Panc1 (cell line): ENCODE measurements at regions of chr1 and their contacts with region 1.

Region 1: GRCh38 chr1:212608209-212608955 is at the start of gene ATF3:
- DNase-seq: peak; percentile 96
- ATAC-seq: peak; percentile 89
- H3K4me3 ChIP-seq: peak within 1 kb of the TSS; percentile 74 to 84
- H3K27ac ChIP-seq: peak within 1 kb of the TSS; percentile 84
- H3K4me1 ChIP-seq: peaks cover 20% of the 10 kb centered on the region
- H3K27me3 ChIP-seq: peaks cover 42% of the 10 kb centered on the region
- CTCF ChIP-seq: no peak
- total RNA-seq, gene ATF3: 13.3 TPM

Region 2: DNA sequence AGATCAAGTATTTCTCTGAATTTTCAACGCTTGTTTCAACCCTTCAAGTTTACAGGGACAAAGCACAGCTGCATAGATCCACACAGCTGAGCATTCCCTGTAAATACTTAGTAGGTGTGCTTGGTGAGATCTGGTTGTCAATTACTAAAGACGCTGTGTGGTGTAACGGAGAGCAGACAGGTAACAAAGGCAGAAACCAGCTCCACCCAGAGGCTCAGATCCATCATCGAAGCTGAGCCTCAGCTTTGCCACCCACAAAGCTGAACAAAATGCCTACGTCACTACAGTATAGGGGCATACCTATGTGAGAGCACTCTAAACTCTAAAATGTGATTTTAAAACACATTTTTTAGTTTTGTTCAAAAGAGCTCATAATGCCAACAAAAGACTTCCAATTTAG is 232.4 kb before region 1 on chr1:
- CTCF ChIA-PET with region 1: no interaction called
- POLR2A ChIA-PET with region 1: interaction called, 10 read pairs
- in situ Hi-C with region 1: no loop called
- intact Hi-C with region 1: no loop called
- DNase-seq: no peak
- ATAC-seq: no peak
- H3K4me3 ChIP-seq: no peak overlapping the region
- H3K27ac ChIP-seq: no peak overlapping the region
- H3K4me1 ChIP-seq: no peaks in the 10 kb centered on the region
- H3K27me3 ChIP-seq: no peaks in the 10 kb centered on the region
- CTCF ChIP-seq: no peak

Region 3: GRCh38 chr1:212432706-212433576 is 175.4 kb before region 1 on chr1 and contains the start of gene NENF:
- CTCF ChIA-PET with region 1: no interaction called
- POLR2A ChIA-PET with region 1: interaction called, 12 read pairs
- in situ Hi-C with region 1: no loop called
- intact Hi-C with region 1: no loop called
- DNase-seq: no peak
- ATAC-seq: peak; percentile 100
- H3K4me3 ChIP-seq: peak within 1 kb of the TSS; percentile 72 to 80
- H3K27ac ChIP-seq: peak within 1 kb of the TSS; percentile 97
- H3K4me1 ChIP-seq: peaks cover 3% of the 10 kb centered on the region; the same call in 1 of the 2 replicates
- H3K27me3 ChIP-seq: no peaks in the 10 kb centered on the region
- CTCF ChIP-seq: no peak
- total RNA-seq, gene NENF: 72.4 TPM

Region 4: DNA sequence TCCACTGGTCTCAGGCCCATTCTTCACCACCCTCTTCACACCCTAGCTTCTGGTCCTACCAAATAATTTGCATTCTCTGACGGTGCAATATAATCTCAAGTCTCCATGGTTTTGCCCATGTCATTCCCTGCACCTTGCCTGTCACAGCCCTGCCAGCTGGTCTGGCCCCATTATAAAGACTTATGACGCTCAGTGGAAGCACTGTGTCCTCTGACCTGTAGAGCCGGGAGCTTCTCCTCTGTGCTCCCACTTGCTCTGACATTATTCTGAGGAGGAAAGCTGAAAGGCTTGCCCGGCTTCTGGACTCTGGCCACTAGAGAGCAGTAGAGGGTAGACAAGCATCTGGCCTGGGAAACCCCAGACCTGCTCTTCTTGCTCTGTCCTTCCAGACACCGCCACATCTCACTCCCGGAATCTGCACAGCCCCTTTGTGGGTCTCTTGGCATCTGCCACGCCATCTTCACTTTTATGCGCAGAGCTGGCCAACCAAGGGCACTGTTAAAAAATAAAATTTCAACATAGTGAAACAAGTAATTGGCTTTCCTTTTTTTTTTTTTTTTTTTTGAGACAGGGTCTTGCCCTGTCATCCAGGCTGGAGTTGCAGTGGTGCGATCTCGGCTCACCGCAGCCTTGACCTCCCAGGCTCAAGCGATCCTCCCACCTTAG is 131.2 kb before region 1 on chr1:
- CTCF ChIA-PET with region 1: interaction called, 9 read pairs
- POLR2A ChIA-PET with region 1: interaction called, 17 read pairs
- in situ Hi-C with region 1: no loop called
- intact Hi-C with region 1: no loop called
- DNase-seq: peak; percentile 81
- ATAC-seq: peak; percentile 96
- H3K4me3 ChIP-seq: no peak overlapping the region
- H3K27ac ChIP-seq: no peak overlapping the region
- H3K4me1 ChIP-seq: 0 out of 2 replicates have a peak, but pooled peaks cover 2% of the 10 kb centered on the region
- H3K27me3 ChIP-seq: no peaks in the 10 kb centered on the region
- CTCF ChIP-seq: peak; percentile 95

Region 5: DNA sequence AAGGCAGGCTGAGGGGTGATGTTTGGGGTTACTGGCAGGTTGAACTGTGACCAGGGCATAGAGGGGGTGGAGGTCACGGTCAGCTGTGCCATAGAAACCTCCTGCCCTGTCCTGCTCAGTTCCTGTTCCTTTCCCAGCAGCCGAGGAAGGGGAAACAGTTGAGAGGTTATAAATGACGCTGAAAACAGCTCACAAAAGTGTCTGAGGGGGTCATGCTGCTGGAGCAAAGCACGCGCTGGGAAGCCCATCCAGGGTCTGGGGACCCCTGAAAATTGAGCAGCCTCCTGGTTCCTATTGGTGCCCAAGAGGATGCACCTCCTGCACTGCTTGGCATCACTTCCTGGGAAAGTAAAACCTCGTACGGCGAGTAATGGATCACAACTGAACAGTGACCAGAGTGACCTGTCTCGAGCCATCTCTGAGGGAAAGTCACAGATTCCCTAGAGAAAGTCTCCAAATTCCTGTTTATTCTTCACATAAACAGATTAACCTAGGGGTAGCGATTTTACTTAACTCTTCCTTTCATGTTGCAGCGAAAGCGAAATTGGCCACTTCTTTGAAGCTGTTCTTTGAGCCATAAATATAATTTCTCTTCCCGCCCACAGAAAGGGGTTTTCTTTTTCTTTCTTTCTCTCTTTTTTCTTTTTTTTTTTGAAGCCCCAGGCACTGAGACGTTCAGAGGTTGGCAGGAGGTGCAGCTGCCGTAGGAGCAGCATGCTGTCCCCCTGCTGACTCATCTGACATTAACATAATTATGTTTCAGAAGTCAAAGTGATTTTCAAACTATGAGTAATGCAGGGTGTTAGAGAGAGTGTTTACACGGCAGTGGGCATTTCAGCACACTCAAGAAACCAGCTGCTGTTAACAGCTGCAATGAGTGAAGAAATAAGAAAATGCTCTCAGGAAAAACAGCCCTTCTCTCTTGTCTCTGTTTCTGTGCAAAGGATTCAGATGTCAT is 41.6 kb before region 1 on chr1:
- CTCF ChIA-PET with region 1: no interaction called
- POLR2A ChIA-PET with region 1: interaction called, 17 read pairs
- in situ Hi-C with region 1: no loop called
- intact Hi-C with region 1: no loop called
- DNase-seq: peak; percentile 24
- ATAC-seq: peak; percentile 90
- H3K4me3 ChIP-seq: peak overlapping the region; percentile 47 to 81
- H3K27ac ChIP-seq: peak overlapping the region; percentile 80
- H3K4me1 ChIP-seq: peaks cover 20% of the 10 kb centered on the region
- H3K27me3 ChIP-seq: no peaks in the 10 kb centered on the region
- CTCF ChIP-seq: no peak

Region 6: DNA sequence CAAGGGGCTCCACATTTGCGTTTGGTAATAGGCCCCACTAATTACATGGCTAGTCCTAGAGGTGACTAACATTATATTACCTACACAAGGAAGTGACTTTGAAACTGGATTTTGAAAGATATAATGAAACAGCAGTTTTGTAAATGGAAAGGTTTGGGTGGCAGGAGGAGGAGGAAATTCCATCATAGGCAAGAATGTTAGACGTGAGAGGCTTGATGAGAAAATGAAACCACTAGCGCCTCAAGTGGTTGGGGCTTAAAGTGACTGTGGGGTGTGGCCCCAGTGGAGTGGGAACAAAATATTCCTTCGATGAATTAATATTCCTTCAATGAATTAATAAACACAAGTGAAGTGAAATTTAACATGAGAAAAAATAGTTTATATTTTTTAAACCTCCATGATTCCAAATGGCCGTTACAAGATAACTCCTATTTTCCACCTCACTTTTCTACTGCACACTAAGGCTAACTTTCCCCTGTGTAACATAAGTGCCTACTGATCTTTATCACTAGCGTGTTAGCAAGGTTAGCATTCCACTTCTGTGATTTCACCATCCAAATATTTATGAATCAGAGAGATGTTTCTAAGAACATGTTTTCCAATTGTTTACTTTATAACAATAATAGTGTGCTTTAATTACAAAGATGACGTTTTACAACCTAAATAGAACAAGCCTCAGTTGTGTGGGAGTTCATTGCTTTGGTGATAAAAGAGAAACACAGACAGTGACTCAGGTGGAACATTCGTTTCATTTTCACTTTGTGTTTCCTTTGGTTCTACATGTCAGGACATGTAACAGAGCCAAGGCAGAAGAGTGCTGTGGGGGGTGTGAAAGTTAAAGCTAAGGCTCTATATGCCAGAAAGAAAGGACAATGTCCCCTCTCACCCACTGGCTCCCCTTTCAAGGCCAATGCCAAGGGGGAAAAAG is 12.3 kb before region 1 on chr1:
- CTCF ChIA-PET with region 1: interaction called, 6 read pairs
- POLR2A ChIA-PET with region 1: interaction called, 14 read pairs
- in situ Hi-C with region 1: no loop called
- intact Hi-C with region 1: no loop called
- DNase-seq: peak; percentile 92
- ATAC-seq: peak; percentile 94
- H3K4me3 ChIP-seq: no peak overlapping the region
- H3K27ac ChIP-seq: peak overlapping the region; percentile 68
- H3K4me1 ChIP-seq: peaks cover 13% of the 10 kb centered on the region
- H3K27me3 ChIP-seq: 0 out of 2 replicates have a peak, but pooled peaks cover 2% of the 10 kb centered on the region
- CTCF ChIP-seq: peak; percentile 80